H1 (cell line): ENCODE measurements at regions of chr11 and their contacts with region 1.

Region 1: GRCh38 chr11:59171508-59172322 is at the start of gene DTX4:
- DNase-seq: peak; percentile 79 to 95
- H3K4me3 ChIP-seq: peak within 1 kb of the TSS; percentile 48 to 95 (median 92)
- H3K27ac ChIP-seq: peak within 1 kb of the TSS; percentile 90
- H3K4me1 ChIP-seq: peaks cover 4 to 10% (median 7%) of the 10 kb centered on the region in 4 experiments; a peak in 6 of 7 replicates
- H3K27me3 ChIP-seq: no peaks in the 10 kb centered on the region
- CTCF ChIP-seq: peak; percentile 90 to 98 (median 95)
- EP300 ChIP-seq: peak in 1 of 2 experiments; percentile 67; a peak in 1 of 3 replicates
- POLR2A ChIP-seq: peak; percentile 63 to 72
- RAD21 ChIP-seq: peak; percentile 91 to 93
- total RNA-seq, gene DTX4: 18.8 and 20.0 TPM in 2 replicates

Region 2: DNA sequence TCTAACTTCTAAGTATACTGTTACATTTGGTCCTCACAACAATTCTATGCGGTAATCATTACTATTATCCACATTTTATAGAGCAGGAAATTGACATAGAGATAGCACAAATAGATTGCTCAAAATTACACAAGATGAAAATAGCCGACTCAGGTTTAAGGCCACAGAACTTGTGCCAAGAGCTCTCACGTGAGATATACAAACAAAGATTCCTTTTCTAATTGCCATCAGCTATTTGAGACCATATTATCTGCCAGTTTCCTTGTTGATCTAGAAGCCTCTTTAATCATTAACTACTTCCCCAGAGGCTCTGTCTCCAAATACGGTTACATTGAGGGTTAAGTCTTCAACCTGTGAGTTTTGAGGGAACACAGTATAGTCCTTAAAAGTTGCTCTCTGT is 146.6 kb before region 1 on chr11:
- CTCF ChIA-PET with region 1: no interaction called
- POLR2A ChIA-PET with region 1: no interaction called
- DNase-seq: no peak
- H3K4me3 ChIP-seq: no peak overlapping the region
- H3K27ac ChIP-seq: no peak overlapping the region
- H3K4me1 ChIP-seq: no peaks in the 10 kb centered on the region
- H3K27me3 ChIP-seq: no peaks in the 10 kb centered on the region
- CTCF ChIP-seq: no peak
- EP300 ChIP-seq: no peak
- POLR2A ChIP-seq: no peak
- RAD21 ChIP-seq: no peak

Region 3: DNA sequence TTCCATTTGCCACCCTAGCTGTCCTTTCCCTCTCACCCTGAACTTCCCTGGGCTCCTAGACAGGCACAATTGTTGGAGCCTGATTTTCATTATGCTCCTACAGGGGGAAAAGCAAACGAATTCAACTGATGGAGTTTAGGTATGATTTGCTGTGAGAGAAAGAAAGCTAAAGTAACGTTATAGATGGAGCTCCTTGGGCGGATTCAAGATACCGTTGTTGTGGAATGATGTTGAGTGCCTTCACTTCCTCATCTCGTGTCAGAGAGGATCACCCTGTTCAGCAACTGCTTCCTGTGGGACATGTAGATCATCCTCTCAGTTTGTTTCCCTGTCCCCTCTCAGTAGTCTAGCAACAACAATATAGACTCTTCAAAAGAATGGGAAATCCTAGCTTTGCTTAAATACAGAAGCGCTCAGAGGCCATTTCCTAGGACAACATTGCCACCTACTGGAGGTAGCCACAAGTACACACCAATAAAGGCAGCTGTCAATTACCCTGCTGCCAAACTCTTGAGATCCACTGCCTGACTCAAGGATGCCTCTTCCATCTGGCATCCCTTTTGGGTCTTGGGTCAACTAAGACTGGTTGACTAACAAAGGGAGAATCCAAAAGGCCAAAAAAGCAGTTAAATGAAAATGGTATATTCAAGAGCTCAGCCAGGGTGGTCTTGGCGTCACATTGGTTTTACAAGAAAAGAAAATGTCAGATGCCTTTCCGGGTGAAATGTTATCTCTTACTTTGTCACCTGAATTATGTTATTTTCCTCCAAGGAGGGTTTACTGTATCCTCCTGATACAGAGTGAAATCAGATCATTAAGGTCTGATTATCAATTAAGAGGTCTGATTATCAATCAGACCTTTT is 13.3 kb before region 1 on chr11:
- CTCF ChIA-PET with region 1: interaction called, 14 read pairs
- POLR2A ChIA-PET with region 1: no interaction called
- DNase-seq: peak in 1 of 2 experiments; percentile 67
- H3K4me3 ChIP-seq: no peak overlapping the region
- H3K27ac ChIP-seq: no peak overlapping the region; the same call in 1 of the 2 replicates
- H3K4me1 ChIP-seq: peaks cover 0 to 4% (median 0%) of the 10 kb centered on the region in 4 experiments; a peak in 2 of 7 replicates
- H3K27me3 ChIP-seq: no peaks in the 10 kb centered on the region
- CTCF ChIP-seq: peak; percentile 29 to 87 (median 80)
- EP300 ChIP-seq: no peak
- POLR2A ChIP-seq: no peak
- RAD21 ChIP-seq: peak; percentile 91 to 92

Region 4: DNA sequence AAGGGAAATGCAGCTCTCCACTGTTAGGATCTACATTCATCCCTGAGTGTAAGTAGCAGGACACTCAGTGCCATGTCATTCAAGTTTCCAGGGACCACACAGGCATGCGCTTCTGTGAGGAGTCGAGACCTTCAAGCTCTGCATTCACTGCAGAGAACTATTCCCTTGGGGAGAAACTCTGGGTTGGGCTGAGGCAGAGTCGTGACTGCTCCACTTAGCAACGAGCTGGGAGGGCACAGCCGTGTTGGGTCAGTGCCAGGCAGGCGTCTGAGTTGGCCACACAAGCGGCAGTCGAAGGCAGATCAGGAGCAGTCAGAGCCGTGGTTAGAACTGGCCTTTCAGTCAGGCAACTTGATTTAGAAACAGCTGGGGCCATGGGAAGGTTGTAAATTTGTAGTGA is 26.3 kb after region 1 on chr11:
- CTCF ChIA-PET with region 1: interaction called, 96 read pairs
- POLR2A ChIA-PET with region 1: interaction called, 12 read pairs
- DNase-seq: no peak
- H3K4me3 ChIP-seq: no peak overlapping the region
- H3K27ac ChIP-seq: no peak overlapping the region
- H3K4me1 ChIP-seq: no peaks in the 10 kb centered on the region; a peak in 1 of 7 replicates
- H3K27me3 ChIP-seq: no peaks in the 10 kb centered on the region
- CTCF ChIP-seq: no peak
- EP300 ChIP-seq: no peak
- POLR2A ChIP-seq: no peak
- RAD21 ChIP-seq: no peak

Region 5: DNA sequence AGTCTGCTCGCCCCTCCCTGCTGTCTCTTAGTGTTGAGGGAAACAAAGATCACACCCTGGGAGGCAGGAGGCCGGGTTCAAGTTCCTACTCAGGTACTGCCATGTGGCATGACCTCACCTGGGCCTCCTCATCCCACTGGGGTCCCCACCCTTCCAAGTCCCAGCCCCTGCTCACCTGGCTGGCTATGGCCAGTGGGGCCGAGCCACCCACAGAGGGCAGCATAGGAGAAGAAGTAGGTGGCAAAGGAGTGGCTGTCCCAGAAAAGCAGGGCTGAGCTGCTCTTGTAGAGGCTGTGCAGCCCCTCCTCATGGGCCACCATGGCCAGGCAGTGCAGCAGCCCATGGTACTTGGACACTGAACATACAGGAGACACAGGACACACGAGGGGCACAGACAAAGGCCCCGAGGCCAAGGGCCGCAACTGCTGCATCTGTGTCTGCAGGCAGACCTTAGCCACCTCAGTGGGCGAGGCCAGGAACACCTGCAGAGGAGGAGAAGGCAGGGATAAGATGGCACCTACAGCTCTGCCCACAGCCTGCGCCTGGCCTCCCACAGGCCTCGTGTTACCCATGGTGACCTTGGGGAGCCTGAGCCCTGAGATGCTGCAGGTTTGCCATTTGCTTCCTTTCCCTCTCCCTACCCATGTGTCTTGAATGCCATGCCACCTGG is 91.6 kb after region 1 on chr11:
- CTCF ChIA-PET with region 1: interaction called, 13 read pairs
- POLR2A ChIA-PET with region 1: interaction called, 4 read pairs
- DNase-seq: peak in 1 of 2 experiments; percentile 82
- H3K4me3 ChIP-seq: no peak overlapping the region
- H3K27ac ChIP-seq: no peak overlapping the region
- H3K4me1 ChIP-seq: no peaks in the 10 kb centered on the region
- H3K27me3 ChIP-seq: no peaks in the 10 kb centered on the region
- CTCF ChIP-seq: peak; percentile 70 to 75 (median 72)
- EP300 ChIP-seq: no peak
- POLR2A ChIP-seq: no peak
- RAD21 ChIP-seq: peak; percentile 83 to 90